ENCODE measurements at regions of chr15 and their contacts with region 1.

Region 1: DNA sequence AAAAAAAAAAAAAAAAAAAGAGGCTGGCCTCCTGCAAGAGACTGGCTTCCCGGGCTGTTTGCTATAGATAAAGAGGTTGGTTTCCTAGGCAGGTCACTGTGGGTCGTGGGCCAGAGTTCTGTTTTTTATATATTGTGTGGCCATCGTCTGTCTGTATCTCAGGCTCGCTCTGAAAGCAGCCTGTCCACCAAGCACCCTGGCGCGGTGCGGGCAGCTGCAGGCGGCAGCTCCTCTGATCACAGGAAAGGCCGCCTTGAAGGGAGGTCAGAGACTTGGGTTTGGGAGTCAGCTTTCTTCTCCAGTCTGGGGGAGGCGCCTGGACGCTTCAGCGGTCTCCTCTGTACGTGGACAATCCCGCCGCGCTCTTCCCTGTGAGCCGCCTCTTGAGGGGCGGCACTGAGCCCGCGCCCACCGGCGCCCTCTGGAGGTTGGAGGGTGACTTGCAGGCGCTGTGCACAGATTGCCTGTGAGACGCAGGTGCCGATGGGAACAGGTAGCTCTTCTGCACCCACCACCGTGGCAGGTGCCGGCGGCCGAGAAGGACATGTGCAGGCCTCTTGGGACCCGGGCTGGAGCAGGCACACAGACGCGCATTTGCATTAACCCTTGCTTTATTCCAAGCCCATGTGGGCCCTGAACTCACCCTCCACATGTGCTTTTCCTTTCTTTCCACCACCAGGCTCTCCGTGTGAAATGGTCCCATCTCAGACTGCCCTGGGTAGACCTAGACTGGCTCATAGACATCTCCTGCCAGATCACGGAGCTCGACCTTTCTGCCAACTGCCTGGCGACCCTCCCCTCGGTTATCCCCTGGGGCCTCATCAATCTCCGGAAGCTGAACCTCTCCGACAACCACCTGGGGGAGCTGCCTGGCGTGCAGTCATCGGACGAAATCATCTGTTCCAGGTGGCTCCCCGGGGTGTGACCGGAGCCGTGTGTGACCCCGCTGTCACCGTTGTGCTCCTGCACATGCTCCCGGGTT is 89.3 kb downstream of the LRRK1 start:
- DNase-seq: peak; percentile 85
- H3K4me3 ChIP-seq: peak overlapping the region; percentile 59
- H3K27ac ChIP-seq: peak overlapping the region; percentile 76
- H3K4me1 ChIP-seq: peaks cover 40% of the 10 kb centered on the region
- CTCF ChIP-seq: peak; percentile 91

Region 2: GRCh38 chr15:100627789-100628395 is 380.6 kb before region 1 on chr15:
- CTCF ChIA-PET with region 1: no interaction called
- POLR2A ChIA-PET with region 1: no interaction called
- intact Hi-C with region 1: loop called (anchors 5 kb)
- DNase-seq: peak; percentile 72
- H3K4me3 ChIP-seq: no peak overlapping the region
- H3K27ac ChIP-seq: no peak overlapping the region
- H3K4me1 ChIP-seq: no peaks in the 10 kb centered on the region
- CTCF ChIP-seq: peak; percentile 93

Region 3: DNA sequence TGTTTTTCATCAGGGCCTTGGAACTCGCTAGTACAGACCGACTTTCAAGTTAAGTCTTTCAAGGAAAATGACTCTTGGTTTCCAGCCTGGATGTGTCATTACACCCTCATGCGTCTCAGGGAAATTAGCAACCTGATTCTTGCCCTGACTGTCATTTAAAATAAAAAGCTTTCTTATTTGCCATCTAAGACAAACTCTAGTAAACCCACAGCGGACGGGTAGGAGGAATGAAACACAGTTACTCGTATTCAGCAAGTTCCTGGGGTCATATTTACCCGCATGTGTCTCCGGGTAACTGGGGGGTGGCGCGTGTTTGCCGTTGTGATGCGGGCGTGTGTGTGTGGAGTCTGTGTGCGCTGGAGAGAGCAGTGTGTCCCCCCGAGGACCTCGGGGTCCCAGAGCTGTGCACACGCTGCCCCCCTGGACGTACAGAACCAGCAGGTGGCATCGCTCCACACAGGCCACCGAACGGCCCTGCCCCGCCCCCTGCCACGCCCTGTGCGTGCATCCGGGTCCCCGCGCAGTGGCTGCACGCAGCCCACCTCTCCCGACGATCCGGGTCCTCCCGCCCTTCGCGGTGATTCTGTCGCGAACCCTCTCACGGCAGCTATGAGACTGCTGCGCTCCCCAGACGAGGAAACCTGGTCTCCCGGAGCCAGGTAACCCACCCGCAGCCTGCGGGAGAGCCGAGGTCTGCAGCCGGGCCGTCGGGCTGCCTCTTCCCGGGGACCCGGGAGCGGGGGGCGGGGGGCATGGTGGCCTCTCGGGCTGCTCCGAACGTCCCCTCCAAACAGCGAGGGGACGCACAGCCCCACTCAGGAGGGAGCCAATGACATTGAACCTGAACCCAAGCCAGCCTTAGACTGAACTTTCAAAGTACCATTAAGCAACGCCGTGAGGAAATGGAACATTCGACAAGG is 158.9 kb before region 1 on chr15:
- CTCF ChIA-PET with region 1: no interaction called
- POLR2A ChIA-PET with region 1: interaction called, 4 read pairs
- intact Hi-C with region 1: loop called (anchors 2 kb)
- DNase-seq: peak; percentile 82
- H3K4me3 ChIP-seq: peak overlapping the region; percentile 72
- H3K27ac ChIP-seq: no peak overlapping the region
- H3K4me1 ChIP-seq: no peaks in the 10 kb centered on the region
- CTCF ChIP-seq: peak; percentile 75

Region 4: GRCh38 chr15:100873029-100873677 is 135.3 kb before region 1 on chr15:
- CTCF ChIA-PET with region 1: no interaction called
- POLR2A ChIA-PET with region 1: no interaction called
- intact Hi-C with region 1: loop called (anchors 5 kb)
- DNase-seq: peak; percentile 77
- H3K4me3 ChIP-seq: no peak overlapping the region
- H3K27ac ChIP-seq: no peak overlapping the region
- H3K4me1 ChIP-seq: no peaks in the 10 kb centered on the region
- CTCF ChIP-seq: peak; percentile 93

Region 5: GRCh38 chr15:100889385-100890050 is 118.9 kb before region 1 on chr15:
- CTCF ChIA-PET with region 1: no interaction called
- POLR2A ChIA-PET with region 1: no interaction called
- intact Hi-C with region 1: no loop called
- DNase-seq: no peak
- H3K4me3 ChIP-seq: no peak overlapping the region
- H3K27ac ChIP-seq: no peak overlapping the region
- H3K4me1 ChIP-seq: no peaks in the 10 kb centered on the region
- CTCF ChIP-seq: no peak

Region 6: DNA sequence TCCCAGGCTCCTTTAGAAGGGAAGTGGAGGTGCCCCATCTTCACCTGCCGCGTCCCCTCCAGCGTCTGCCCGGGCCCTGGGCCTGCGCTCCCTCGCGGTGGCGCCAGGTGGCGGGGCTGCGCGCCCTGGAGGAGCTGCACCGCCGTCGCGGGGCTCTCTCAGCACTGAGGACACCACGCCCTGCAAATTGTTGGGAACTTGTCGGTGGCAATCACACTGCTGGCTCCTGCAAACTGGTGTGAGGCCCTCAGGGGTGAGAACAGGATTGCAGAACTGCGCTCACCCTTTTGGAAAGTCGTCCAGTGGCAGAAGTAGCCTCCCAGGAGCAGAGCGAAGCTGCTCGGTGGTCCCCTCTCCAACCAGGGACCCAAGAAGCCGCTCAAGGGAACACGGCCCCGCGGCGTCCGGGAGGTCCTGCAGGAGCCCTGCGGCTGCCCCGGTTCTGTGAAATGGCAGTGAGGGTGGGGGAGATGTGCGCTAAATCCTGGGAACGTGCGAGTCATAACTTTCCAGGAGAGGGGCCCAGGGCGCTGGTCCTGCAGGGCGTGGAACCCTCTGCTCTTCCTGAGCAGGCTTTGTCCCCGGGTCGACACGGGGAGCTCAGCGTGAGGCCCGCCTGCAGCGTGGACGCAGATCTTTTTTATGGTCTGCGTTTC is 90.3 kb before region 1 on chr15:
- CTCF ChIA-PET with region 1: interaction called, 42 read pairs
- POLR2A ChIA-PET with region 1: interaction called, 12 read pairs
- intact Hi-C with region 1: loop called (anchors 1 kb)
- DNase-seq: peak; percentile 92
- H3K4me3 ChIP-seq: peak overlapping the region; percentile 91
- H3K27ac ChIP-seq: peak overlapping the region; percentile 92
- H3K4me1 ChIP-seq: peaks cover 51% of the 10 kb centered on the region
- CTCF ChIP-seq: peak; percentile 92